ENCODE measurements at regions of chr11 and their contacts with region 1.

Region 1: GRCh38 chr11:113274713-113275582 is 39.4 kb upstream of the TTC12 start:
- DNase-seq: peak; percentile 34
- H3K4me3 ChIP-seq: no peak overlapping the region
- H3K27ac ChIP-seq: no peak overlapping the region
- H3K4me1 ChIP-seq: no peaks in the 10 kb centered on the region
- H3K27me3 ChIP-seq: no peaks in the 10 kb centered on the region
- CTCF ChIP-seq: peak; percentile 9 to 48

Region 2: GRCh38 chr11:113129261-113129992 is 145.5 kb before region 1 on chr11:
- CTCF ChIA-PET with region 1: no interaction called
- dilution Hi-C with region 1: no loop called
- in situ Hi-C with region 1: loop called in 1 of 2 experiments (anchors 25 kb)
- intact Hi-C with region 1: loop called (anchors 5 kb)
- DNase-seq: no peak
- H3K4me3 ChIP-seq: no peak overlapping the region
- H3K27ac ChIP-seq: no peak overlapping the region
- H3K4me1 ChIP-seq: no peaks in the 10 kb centered on the region
- H3K27me3 ChIP-seq: peaks cover 4% of the 10 kb centered on the region
- CTCF ChIP-seq: no peak